H1 (cell line): ENCODE measurements at regions of chr1 and their contacts with region 1.

Region 1: GRCh38 chr1:45583264-45583665 is 576 bp upstream of the NASP start:
- DNase-seq: peak; percentile 90
- H3K4me3 ChIP-seq: peak overlapping the region; percentile 82 to 100 (median 94)
- H3K27ac ChIP-seq: peak overlapping the region; percentile 98; the same call in 1 of the 2 replicates
- H3K4me1 ChIP-seq: peaks cover 0 to 9% (median 1%) of the 10 kb centered on the region in 4 experiments; a peak in 4 of 7 replicates
- H3K27me3 ChIP-seq: no peaks in the 10 kb centered on the region
- CTCF ChIP-seq: no peak
- EP300 ChIP-seq: no peak
- POLR2A ChIP-seq: no peak
- RAD21 ChIP-seq: no peak

Region 2: GRCh38 chr1:45499415-45499769 is 83.9 kb before region 1 on chr1:
- CTCF ChIA-PET with region 1: interaction called, 3 read pairs
- POLR2A ChIA-PET with region 1: interaction called, 26 read pairs
- DNase-seq: no peak
- H3K4me3 ChIP-seq: peak overlapping the region; percentile 65 to 86 (median 72)
- H3K27ac ChIP-seq: no peak overlapping the region
- H3K4me1 ChIP-seq: peaks cover 0 to 10% (median 3%) of the 10 kb centered on the region in 4 experiments; a peak in 6 of 7 replicates
- H3K27me3 ChIP-seq: no peaks in the 10 kb centered on the region
- CTCF ChIP-seq: no peak
- EP300 ChIP-seq: no peak
- POLR2A ChIP-seq: no peak
- RAD21 ChIP-seq: no peak

Region 3: DNA sequence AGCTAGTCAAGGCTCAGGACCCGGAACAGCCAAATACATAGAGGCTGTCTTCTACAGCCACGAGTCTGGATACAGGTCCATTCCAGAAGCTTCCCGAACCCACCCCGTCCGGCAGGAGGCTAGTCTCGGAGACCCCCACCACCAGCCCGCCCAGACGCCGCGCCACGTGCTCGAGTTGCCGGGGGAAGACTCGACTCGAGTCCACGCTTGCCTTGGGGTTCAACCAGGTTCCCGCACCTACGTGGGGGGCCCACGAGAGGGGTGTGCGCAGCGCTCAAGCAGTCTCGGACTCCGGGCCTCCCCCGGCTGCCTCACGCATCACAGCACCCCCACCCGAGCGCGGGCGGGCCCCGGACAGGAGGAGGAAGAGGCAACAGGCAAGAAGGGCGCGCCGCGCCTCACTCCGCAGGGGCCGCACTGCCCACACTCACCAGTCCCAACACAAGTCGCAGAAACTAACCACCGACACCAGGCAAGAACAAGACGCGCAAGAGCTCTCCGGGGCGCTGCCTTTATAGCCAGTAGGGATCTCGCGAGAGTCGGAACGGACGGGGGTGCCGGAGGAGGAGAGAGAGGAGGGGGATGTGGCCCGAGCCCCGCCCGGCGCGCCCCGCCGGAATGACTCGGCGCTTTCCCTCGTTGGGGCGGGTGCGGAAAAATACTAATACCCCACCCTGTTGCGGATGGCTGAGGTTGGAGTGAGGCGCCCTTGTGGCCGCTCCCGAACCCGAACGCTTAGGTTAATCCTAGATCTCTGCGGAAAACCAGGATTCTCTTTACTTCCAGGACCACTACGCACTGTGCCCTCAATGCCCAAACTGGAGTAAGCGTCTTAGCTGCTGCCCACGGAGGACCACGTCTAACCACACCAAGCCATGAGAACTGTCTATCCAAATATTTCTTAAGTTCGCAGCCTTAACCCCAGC is 61.6 kb before region 1 on chr1 and contains the start of gene PRDX1:
- CTCF ChIA-PET with region 1: no interaction called
- POLR2A ChIA-PET with region 1: interaction called, 145 read pairs
- DNase-seq: peak; percentile 91 to 99
- H3K4me3 ChIP-seq: peak within 1 kb of the TSS; percentile 96 to 100 (median 98)
- H3K27ac ChIP-seq: peak within 1 kb of the TSS; percentile 91
- H3K4me1 ChIP-seq: peaks cover 2 to 12% (median 5%) of the 10 kb centered on the region in 4 experiments; a peak in 5 of 7 replicates
- H3K27me3 ChIP-seq: no peaks in the 10 kb centered on the region
- CTCF ChIP-seq: peak in 1 of 3 experiments; percentile 11; a peak in 1 of 4 replicates
- EP300 ChIP-seq: peak in 1 of 2 experiments; percentile 82; a peak in 1 of 3 replicates
- POLR2A ChIP-seq: peak; percentile 100
- RAD21 ChIP-seq: no peak; a peak in 1 of 4 replicates
- total RNA-seq, gene PRDX1: 1,354 and 1,418 TPM in 2 replicates

Region 4: DNA sequence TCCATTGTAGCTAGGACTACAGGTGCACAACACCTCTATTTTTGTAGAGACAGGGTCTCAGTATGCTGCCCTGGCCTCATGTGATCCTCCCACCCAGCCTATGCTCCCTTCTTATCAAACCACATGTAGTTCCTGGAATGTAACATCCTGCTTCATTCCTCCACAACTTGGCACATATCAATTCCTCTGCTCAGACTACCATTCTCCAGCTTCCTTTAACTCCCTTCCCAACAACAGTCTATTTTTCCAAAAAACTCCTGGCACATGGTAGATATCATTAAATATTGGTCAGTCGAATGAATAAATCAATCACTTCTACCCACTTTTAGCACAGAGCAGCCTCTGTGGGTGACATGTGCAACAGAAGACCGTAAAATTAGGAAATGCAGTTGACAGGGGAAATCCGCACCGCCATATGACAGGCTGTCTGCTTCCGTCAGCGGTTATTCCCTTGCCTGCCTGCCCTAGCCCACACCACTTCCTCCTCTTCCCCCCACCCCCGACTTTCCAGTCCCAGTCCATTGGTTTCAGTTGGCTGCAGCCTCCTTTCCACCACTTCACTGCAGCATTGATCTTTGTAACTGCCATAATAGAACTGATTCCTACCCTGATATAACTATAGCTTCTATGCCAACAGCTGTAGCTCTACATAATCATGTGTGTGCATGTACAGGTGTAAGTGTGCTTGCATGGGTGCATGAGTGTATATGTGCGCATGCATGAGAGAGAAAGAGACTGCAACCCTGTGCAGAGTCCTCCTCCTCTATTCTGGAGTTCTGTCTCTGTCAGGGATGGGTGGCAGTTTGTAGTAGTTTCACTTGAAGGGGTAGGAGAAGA is 39.5 kb before region 1 on chr1:
- CTCF ChIA-PET with region 1: no interaction called
- POLR2A ChIA-PET with region 1: interaction called, 47 read pairs
- DNase-seq: no peak
- H3K4me3 ChIP-seq: no peak overlapping the region
- H3K27ac ChIP-seq: no peak overlapping the region
- H3K4me1 ChIP-seq: peaks cover 0 to 5% (median 2%) of the 10 kb centered on the region in 4 experiments; a peak in 4 of 7 replicates
- H3K27me3 ChIP-seq: no peaks in the 10 kb centered on the region
- CTCF ChIP-seq: no peak
- EP300 ChIP-seq: no peak
- POLR2A ChIP-seq: no peak
- RAD21 ChIP-seq: no peak

Region 5: DNA sequence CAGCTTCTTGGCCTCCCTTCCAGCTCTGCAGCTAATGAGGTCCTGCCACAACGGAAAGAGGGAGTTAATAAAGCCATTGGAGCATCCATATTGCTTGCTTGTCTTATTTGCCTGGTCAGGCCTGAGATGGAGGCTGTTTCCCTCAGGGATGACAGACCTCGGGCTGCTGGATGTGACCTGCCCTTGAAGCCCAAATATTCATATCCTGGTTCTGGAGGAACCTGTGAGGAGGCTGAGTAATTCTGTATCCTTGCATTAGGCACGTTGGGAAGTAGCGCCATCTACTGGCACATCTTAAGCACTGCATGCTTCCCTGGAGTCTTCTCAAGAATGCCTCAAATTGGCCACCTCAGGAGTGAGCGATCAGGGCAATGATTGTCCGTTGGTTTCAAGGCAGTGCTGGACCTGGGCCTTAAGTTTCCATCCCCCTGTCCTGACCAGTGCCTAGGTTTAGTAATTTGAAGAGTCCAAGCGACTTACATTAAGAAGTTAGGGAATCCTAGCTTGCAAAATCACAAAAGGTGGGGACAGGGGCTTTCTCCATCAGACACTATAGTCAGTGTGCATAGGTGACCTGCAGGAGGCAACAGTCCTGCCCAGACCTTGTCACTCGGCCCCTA is 13.2 kb before region 1 on chr1:
- CTCF ChIA-PET with region 1: interaction called, 52 read pairs
- POLR2A ChIA-PET with region 1: interaction called, 181 read pairs
- DNase-seq: peak in 1 of 2 experiments; percentile 83
- H3K4me3 ChIP-seq: no peak overlapping the region
- H3K27ac ChIP-seq: no peak overlapping the region
- H3K4me1 ChIP-seq: peaks cover 0 to 12% (median 5%) of the 10 kb centered on the region in 4 experiments; a peak in 6 of 7 replicates
- H3K27me3 ChIP-seq: no peaks in the 10 kb centered on the region
- CTCF ChIP-seq: peak; percentile 59 to 96 (median 94)
- EP300 ChIP-seq: no peak
- POLR2A ChIP-seq: peak; percentile 30 to 35; a peak in 1 of 3 replicates
- RAD21 ChIP-seq: peak; percentile 87 to 93

Region 6: DNA sequence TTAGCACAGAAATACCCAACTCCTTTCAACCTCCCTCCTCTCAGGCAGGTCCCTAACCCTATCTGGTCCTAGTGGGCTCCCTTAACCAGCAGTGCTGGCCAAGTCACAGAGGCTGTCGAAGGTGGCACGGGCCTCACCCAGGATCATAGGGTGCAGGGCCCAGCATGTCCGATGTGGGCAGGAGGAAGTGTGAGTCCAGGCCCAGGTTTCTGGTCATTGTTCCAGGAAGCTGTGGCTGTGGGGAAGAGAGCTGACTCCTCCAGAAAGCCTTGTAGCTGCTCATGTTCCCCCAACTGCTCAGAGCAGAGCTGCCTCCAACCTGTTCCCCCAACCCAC is 38.2 kb after region 1 on chr1:
- CTCF ChIA-PET with region 1: no interaction called
- POLR2A ChIA-PET with region 1: interaction called, 47 read pairs
- DNase-seq: no peak
- H3K4me3 ChIP-seq: no peak overlapping the region
- H3K27ac ChIP-seq: no peak overlapping the region
- H3K4me1 ChIP-seq: no peaks in the 10 kb centered on the region; a peak in 1 of 7 replicates
- H3K27me3 ChIP-seq: no peaks in the 10 kb centered on the region
- CTCF ChIP-seq: no peak
- EP300 ChIP-seq: no peak
- POLR2A ChIP-seq: peak in 1 of 2 experiments; percentile 3; a peak in 1 of 3 replicates
- RAD21 ChIP-seq: no peak